Ascending aorta (tissue), 2 donors: ENCODE measurements at regions of chr1 and their contacts with region 1.

Region 1: DNA sequence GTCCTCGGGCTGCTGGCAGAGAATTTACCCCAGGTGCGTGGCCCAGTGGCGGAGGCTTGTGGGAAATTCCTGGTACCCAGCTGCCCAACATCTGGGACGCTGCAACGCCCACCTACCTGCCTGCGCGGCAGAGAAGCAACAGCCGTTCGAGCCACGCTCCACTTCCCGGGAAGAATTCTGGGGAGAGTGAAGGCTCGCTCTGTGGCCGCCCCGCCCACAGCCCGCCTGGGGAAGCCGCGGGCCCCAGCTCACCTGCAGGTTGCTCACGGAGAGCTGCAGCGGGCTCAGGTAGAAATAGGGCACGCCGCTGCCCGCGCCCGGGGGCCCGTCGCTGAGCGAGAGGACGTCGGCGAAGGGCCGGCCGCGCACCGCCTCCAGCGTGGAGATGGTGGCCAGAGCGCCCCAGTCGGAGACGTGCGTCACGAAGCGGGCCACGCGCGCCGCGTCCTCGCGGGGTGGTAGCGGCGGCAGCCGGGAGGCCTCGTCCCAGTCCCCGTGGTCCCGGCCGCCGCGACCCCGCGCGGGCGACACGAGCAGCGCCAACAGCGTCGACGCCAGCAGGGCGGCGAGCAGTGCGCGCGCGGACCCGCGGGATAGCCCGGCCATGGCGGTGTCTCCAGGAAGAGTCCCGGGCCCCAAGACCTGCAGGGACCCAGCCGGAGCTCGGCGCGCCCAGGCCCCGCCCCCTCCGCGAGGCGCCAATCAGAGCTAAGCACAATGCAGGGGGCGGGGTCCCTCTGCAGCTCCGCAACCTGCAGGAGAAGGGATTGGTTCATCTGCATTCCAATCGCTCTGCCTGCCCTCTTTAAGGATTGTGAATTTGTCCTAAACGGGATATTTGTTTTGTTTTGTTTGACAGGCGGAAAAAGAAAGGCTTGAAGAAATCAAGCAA is at the start of gene CREG1:
- DNase-seq: peak; percentile 76 to 96
- H3K4me3 ChIP-seq: peak within 1 kb of the TSS; percentile 77 to 85
- H3K27ac ChIP-seq: peak within 1 kb of the TSS; percentile 74 to 80
- H3K4me1 ChIP-seq: peaks cover 0 to 7% of the 10 kb centered on the region in 2 donors
- H3K27me3 ChIP-seq: no peaks in the 10 kb centered on the region
- CTCF ChIP-seq: no peak
- total RNA-seq, gene CREG1: 170 TPM

Region 2: DNA sequence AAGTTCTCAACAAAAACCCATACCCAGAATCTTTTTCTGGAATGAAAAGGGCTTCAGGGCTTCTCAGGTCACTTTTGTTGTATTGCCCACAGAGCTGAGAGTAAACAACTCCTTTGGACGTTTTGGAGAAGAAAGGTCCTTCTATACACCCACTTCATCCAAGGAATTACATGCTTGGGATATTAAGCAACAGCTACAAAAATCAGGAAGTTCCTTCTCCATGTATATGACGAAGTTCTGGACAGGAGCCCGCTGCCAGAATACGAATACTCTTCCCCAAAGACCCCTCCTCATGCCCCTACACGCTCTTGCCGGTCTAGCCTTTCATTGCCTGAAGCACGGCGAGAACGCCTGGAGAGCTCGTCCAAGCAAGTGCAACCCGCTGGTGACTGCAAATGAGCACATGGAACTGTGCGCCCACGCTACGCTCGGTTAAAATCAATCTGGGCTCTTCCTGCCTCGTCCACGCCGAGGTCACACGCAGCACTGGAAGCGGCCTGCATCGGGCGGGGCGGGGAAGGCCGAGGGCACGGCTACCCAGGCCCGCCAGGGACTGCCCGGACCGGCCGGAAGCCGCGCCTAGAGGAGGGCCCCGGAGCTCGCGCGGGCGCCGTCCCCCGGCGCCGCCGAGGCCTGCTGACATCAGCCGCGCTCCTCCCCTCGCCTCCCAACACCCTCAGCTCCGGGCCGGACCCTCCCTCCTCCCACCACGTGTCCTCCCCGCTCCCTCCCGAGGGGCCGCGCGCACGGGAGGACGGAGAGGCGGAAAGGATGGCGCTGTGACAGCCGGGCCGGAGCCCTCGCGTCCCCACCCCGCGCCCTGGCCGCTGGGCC is 714.4 kb before region 1 on chr1 and contains the start of gene POGK:
- intact Hi-C with region 1: loop called (anchors 1 kb)
- DNase-seq: peak; percentile 66 to 95
- H3K4me3 ChIP-seq: peak within 1 kb of the TSS; percentile 74 to 80
- H3K27ac ChIP-seq: peak within 1 kb of the TSS; percentile 88 to 93
- H3K4me1 ChIP-seq: peaks cover 14 to 42% of the 10 kb centered on the region in 2 donors
- H3K27me3 ChIP-seq: no peaks in the 10 kb centered on the region
- CTCF ChIP-seq: no peak
- total RNA-seq, gene POGK: 10.2 TPM

Region 3: DNA sequence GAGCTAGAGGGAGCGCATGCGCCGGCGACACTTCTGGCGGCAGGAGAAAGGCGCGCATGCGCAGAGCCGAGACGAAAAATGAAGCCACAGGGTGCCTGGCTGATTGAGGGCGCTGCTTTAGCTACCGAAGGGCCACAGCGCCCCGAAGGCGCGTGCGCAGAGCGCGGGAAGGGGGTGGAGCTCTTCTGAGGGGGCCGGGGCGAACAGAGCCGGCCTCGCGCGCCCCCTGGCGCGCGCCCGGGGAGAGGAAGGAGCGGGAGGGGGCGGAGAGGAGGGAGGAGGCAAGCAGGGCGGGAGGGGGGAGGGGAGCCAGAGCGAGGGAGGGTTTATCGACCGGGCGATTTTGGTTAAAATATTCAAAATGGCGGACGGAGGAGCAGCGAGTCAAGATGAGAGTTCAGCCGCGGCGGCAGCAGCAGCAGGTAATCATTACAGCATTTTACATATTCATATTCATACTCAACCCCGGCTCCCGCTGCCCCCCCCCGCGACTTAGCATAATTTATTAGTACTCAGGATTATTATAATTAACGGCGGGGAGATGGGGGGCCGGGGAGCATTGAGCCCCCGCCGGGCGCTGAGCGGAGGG is 332.8 kb before region 1 on chr1 and contains the start of gene POU2F1:
- intact Hi-C with region 1: loop called (anchors 5 kb)
- DNase-seq: peak; percentile 93 to 99
- H3K4me3 ChIP-seq: peak within 1 kb of the TSS; percentile 75 to 97
- H3K27ac ChIP-seq: peak within 1 kb of the TSS; percentile 93 to 98
- H3K4me1 ChIP-seq: peaks cover 0 to 7% of the 10 kb centered on the region in 2 donors
- H3K27me3 ChIP-seq: no peaks in the 10 kb centered on the region
- CTCF ChIP-seq: peak; percentile 70 to 77 (median 71)
- total RNA-seq, gene POU2F1: 3.0 TPM

Region 4: GRCh38 chr1:167687919-167688519 is 134.6 kb after region 1 on chr1:
- intact Hi-C with region 1: loop called (anchors 5 kb)
- DNase-seq: peak in 1 of 2 donors; percentile 91
- H3K4me3 ChIP-seq: no peak overlapping the region
- H3K27ac ChIP-seq: no peak overlapping the region
- H3K4me1 ChIP-seq: peaks cover 7 to 12% of the 10 kb centered on the region in 2 donors
- H3K27me3 ChIP-seq: no peaks in the 10 kb centered on the region
- CTCF ChIP-seq: peak; percentile 80 to 94 (median 94)

Region 5: GRCh38 chr1:168225476-168226190 is 672.3 kb after region 1 on chr1 and contains the start of gene SFT2D2:
- intact Hi-C with region 1: loop called (anchors 5 kb)
- DNase-seq: peak; percentile 21 to 90
- H3K4me3 ChIP-seq: peak within 1 kb of the TSS; percentile 85 to 93
- H3K27ac ChIP-seq: peak within 1 kb of the TSS; percentile 92 to 98
- H3K4me1 ChIP-seq: peaks cover 3 to 20% of the 10 kb centered on the region in 2 donors
- H3K27me3 ChIP-seq: no peaks in the 10 kb centered on the region
- CTCF ChIP-seq: no peak
- total RNA-seq, gene SFT2D2: 40.1 TPM